Heart left ventricle (tissue), 16 donors: ENCODE measurements at regions of chr22 and their contacts with region 1.

Region 1: GRCh38 chr22:36028646-36029405 is at the start of gene RBFOX2:
- DNase-seq: peak; percentile 97 to 98 (median 98)
- ATAC-seq: peak; percentile 93 to 98 (median 96)
- H3K4me3 ChIP-seq: peak within 1 kb of the TSS; percentile 66 to 93 (median 83)
- H3K27ac ChIP-seq: peak within 1 kb of the TSS; percentile 58 to 94 (median 91)
- H3K4me1 ChIP-seq: peaks cover 0 to 32% (median 12%) of the 10 kb centered on the region in 12 donors
- H3K27me3 ChIP-seq: no peaks in the 10 kb centered on the region
- CTCF ChIP-seq: no peak
- POLR2A ChIP-seq: peak in 1 of 2 donors; percentile 65
- total RNA-seq, gene RBFOX2: 71.0 to 102 (median 84.8) TPM

Region 2: GRCh38 chr22:35883031-35883620 is 145.7 kb before region 1 on chr22:
- intact Hi-C with region 1: no loop called
- DNase-seq: peak in 1 of 5 donors; percentile 46
- ATAC-seq: peak; percentile 29 to 85 (median 81)
- H3K4me3 ChIP-seq: peak overlapping the region in 1 of 12 donors; percentile 2
- H3K27ac ChIP-seq: peak overlapping the region in 11 of 12 donors; percentile 18 to 84 (median 73)
- H3K4me1 ChIP-seq: peaks cover 3 to 71% (median 34%) of the 10 kb centered on the region in 12 donors
- H3K27me3 ChIP-seq: no peaks in the 10 kb centered on the region
- CTCF ChIP-seq: no peak
- POLR2A ChIP-seq: no peak

Region 3: DNA sequence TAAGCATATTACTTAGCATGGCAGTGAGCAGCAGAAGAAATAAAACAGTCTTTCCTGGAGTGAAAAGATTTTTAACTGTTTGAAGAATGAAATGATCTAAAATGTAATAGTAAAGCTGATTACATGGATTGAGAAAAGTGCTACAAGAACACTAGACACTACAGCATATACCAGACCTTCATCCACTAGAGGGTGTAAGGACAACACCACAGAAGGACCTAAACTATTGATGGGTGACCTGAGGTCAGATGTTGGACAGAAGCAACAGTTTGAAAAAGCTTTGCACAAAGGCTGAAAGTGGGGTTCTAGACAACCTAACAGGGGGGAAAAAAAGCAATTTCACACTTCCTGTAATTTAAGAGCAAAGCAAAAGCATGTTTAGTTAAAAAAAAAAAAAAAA is 97.9 kb before region 1 on chr22:
- intact Hi-C with region 1: loop called in 2 of 10 experiments (anchors 5 to 10 kb)
- DNase-seq: peak in 1 of 5 donors; percentile 57
- ATAC-seq: peak; percentile 86 to 96 (median 94)
- H3K4me3 ChIP-seq: no peak overlapping the region
- H3K27ac ChIP-seq: peak overlapping the region in 1 of 12 donors; percentile 15
- H3K4me1 ChIP-seq: peaks cover 0 to 12% (median 3%) of the 10 kb centered on the region in 12 donors
- H3K27me3 ChIP-seq: no peaks in the 10 kb centered on the region
- CTCF ChIP-seq: peak; percentile 38 to 85 (median 72)
- POLR2A ChIP-seq: no peak

Region 4: DNA sequence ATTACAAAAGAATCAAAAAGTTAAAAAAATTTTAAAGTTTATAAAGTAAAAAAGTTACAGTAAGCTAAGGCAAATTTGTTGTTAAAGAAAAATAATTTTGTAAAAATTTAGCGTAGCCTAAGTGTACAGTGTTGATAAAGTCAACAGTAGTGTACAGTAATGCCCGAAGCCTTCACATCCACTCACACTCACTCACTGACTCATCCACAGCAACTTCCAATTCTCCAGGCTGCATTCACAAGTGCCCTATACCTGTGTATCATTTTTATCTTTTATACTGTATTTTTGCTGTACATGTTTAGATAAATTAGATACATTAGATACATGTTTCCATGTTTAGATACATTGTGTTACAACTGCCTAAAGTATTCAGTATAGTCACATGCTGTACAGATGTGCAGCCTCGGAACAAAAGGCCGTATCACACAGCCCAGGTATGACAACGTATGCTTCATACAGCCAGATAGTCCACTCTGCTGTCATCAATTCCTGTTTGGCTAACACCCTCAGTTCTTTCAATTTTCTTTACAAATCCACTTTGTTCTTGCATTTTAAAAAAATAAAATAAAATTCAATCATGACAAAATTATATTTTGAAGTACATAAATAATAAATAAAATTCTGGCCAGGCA is 80.9 kb before region 1 on chr22:
- intact Hi-C with region 1: loop called in 3 of 10 experiments (anchors 5 kb)
- DNase-seq: no peak
- ATAC-seq: no peak
- H3K4me3 ChIP-seq: no peak overlapping the region
- H3K27ac ChIP-seq: no peak overlapping the region
- H3K4me1 ChIP-seq: peaks cover 0 to 27% (median 5%) of the 10 kb centered on the region in 12 donors
- H3K27me3 ChIP-seq: no peaks in the 10 kb centered on the region
- CTCF ChIP-seq: no peak
- POLR2A ChIP-seq: no peak

Region 5: GRCh38 chr22:35961480-35962295 is 67.1 kb before region 1 on chr22:
- intact Hi-C with region 1: loop called in 4 of 10 experiments (anchors 5 to 10 kb)
- DNase-seq: peak in 4 of 5 donors; percentile 59 to 81 (median 70)
- ATAC-seq: peak; percentile 89 to 97 (median 94)
- H3K4me3 ChIP-seq: peak overlapping the region in 5 of 12 donors; percentile 12 to 35 (median 19)
- H3K27ac ChIP-seq: peak overlapping the region; percentile 63 to 91 (median 80)
- H3K4me1 ChIP-seq: peaks cover 7 to 55% (median 36%) of the 10 kb centered on the region in 12 donors
- H3K27me3 ChIP-seq: no peaks in the 10 kb centered on the region
- CTCF ChIP-seq: no peak
- POLR2A ChIP-seq: no peak

Region 6: DNA sequence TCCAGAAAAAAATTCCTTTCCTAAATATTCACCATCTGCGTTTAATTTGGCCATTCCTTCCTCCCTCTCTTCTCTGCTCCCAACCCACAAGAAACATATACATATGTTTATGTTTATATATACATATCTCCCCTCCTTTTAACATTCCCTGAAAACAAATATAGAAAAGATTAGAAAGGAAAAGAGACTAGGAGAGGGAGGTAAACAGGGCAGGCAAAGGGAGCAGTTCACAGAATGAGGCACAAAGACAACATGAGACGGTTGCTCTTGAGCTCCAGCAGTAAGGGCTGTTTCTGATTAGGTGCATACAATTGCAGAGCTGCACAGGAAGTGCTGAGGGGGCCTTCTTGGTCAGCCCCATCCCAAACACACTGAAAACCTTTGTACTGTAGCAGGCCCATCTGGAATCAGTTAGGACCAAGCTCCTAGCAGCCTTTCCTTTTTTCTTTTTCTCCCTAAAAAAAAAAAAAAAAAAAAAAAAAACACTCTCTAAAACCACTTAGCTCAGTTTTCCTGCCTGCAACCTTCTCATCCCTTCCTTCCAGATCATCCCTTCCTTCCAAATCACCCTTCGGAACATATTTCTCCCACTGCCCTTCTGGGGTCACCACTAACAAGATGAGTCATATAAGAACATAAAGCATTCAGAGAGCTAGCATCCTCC is 57.2 kb before region 1 on chr22:
- intact Hi-C with region 1: loop called in 4 of 10 experiments (anchors 10 kb)
- DNase-seq: peak in 3 of 5 donors; percentile 29 to 49 (median 32)
- ATAC-seq: peak; percentile 42 to 82 (median 70)
- H3K4me3 ChIP-seq: no peak overlapping the region
- H3K27ac ChIP-seq: peak overlapping the region in 10 of 12 donors; percentile 33 to 81 (median 74)
- H3K4me1 ChIP-seq: peaks cover 0 to 91% (median 36%) of the 10 kb centered on the region in 12 donors
- H3K27me3 ChIP-seq: no peaks in the 10 kb centered on the region
- CTCF ChIP-seq: no peak
- POLR2A ChIP-seq: no peak

Region 7: DNA sequence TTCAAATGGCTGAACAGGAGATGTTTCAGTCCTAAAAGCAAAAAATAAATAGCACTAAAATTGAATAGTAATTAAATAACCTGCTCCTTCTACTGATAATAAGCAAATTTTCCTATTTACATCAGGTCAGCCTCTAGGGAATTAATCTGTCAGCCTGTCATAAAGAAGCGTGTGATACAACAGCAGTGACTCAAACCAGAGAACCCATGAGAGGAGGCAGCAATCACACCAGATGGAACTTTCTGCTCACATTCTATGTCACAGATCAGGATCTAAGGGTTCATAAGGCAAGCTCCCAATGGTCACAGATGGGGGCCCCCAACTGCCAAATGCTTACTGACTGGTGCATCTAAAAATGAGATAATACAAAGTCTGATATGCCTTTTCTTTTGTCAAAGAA is 41.3 kb before region 1 on chr22:
- intact Hi-C with region 1: loop called in 2 of 10 experiments (anchors 5 kb)
- DNase-seq: no peak
- ATAC-seq: no peak
- H3K4me3 ChIP-seq: no peak overlapping the region
- H3K27ac ChIP-seq: no peak overlapping the region
- H3K4me1 ChIP-seq: peaks cover 0 to 75% (median 34%) of the 10 kb centered on the region in 12 donors
- H3K27me3 ChIP-seq: no peaks in the 10 kb centered on the region
- CTCF ChIP-seq: no peak
- POLR2A ChIP-seq: no peak

Region 8: DNA sequence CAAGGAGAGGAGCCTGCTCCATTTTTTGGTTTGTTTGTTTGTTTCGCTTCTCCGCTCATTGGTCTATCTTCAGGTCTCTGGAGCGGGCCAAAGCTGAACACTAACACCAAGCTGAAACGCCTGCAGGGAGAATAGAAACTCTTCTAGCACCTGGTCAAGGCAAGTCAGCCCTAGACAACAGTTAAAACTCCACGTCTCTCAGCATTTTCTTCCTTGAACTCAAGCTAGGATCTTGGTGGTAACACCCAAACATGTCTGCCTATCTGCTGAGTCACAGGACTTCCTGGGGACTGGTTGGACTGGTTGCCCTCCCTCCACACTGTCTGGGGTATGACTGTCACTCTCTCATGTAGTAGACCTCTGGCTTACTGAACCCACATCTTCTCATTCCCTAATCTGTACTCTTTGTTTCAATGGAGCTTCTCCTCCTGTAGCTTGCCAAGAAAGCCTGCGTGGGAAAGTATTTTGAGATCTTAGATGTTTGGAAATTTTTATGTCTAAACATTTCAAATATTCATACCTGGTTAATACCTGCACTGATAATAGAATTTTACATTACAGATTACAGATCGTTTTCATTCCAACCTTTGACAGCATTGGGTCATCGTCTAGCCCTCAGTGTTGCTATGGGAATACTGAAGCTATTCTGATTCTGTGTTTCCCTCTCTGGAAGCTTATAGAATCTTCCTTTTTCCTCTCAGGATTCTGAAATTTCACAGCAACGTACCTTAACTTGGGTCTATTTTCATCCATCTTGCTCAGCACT is 23.9 kb after region 1 on chr22:
- intact Hi-C with region 1: no loop called
- DNase-seq: no peak
- ATAC-seq: no peak
- H3K4me3 ChIP-seq: no peak overlapping the region
- H3K27ac ChIP-seq: no peak overlapping the region
- H3K4me1 ChIP-seq: peaks cover 0 to 13% (median 0%) of the 10 kb centered on the region in 12 donors
- H3K27me3 ChIP-seq: no peaks in the 10 kb centered on the region
- CTCF ChIP-seq: no peak
- POLR2A ChIP-seq: no peak

Region 9: DNA sequence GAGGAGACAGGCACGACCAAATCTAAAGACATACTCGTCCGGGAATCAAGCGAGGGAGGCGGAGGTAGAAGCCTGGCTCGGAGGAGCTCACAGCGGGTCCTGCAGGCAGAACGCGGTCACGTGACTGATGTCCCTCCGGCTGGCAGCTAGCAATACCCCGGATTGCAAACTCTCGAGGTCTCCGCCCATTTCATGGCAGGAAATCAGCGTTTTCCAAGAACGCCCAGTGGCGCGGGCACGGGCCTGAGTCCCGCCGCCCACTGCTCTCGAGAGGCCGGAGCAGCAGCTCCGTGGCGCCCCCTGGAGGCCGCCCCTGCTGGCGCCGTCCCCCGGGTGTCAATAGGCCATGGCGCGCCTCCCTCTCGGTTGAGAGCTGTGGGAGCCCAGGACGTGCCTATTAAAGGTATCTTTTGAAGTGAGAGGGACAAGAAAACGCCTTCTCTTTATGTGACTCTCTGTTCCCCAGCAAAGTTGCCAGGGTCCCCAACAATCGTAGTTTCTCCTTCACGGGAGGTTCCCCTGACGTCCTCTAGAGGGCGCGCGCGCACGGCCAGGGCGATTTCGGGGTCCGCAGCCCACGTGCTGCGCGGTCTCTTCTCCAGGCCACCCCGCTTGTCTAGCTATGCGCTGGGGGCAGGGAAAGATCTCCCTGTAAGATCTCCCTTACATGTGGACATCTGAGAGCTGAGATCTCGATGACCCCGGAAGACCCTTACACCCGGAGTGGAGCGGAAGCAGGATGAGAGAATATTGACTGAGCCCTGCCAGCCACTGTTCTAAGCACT is 37.1 kb after region 1 on chr22:
- intact Hi-C with region 1: loop called in 6 of 10 experiments (anchors 2 to 5 kb)
- DNase-seq: peak; percentile 88 to 94 (median 92)
- ATAC-seq: peak; percentile 92 to 94 (median 93)
- H3K4me3 ChIP-seq: peak overlapping the region; percentile 15 to 69 (median 58)
- H3K27ac ChIP-seq: peak overlapping the region; percentile 72 to 91 (median 82)
- H3K4me1 ChIP-seq: peaks cover 0 to 18% (median 6%) of the 10 kb centered on the region in 12 donors
- H3K27me3 ChIP-seq: no peaks in the 10 kb centered on the region
- CTCF ChIP-seq: peak; percentile 100
- POLR2A ChIP-seq: peak in 1 of 2 donors; percentile 32